ENCODE measurements at regions of chrX and their contacts with region 1.

Region 1: GRCh38 chrX:8971116-8971515 is 62.8 kb downstream of the FAM9B start:
- DNase-seq: peak in 7 of 9 donors; percentile 18 to 59 (median 41)
- ATAC-seq: peak; percentile 49
- H3K4me3 ChIP-seq: no peak overlapping the region
- H3K4me3 Mint-ChIP-seq: no peak overlapping the region
- H3K27ac ChIP-seq: no peak overlapping the region
- H3K27ac Mint-ChIP-seq: peak overlapping the region in 3 of 9 donors; percentile 33 to 72 (median 33)
- H3K4me1 ChIP-seq: no peaks in the 10 kb centered on the region
- H3K4me1 Mint-ChIP-seq: peaks cover 0 to 2% (median 0%) of the 10 kb centered on the region in 7 donors
- H3K27me3 ChIP-seq: no peaks in the 10 kb centered on the region
- H3K27me3 Mint-ChIP-seq: no peaks in the 10 kb centered on the region

Region 2: DNA sequence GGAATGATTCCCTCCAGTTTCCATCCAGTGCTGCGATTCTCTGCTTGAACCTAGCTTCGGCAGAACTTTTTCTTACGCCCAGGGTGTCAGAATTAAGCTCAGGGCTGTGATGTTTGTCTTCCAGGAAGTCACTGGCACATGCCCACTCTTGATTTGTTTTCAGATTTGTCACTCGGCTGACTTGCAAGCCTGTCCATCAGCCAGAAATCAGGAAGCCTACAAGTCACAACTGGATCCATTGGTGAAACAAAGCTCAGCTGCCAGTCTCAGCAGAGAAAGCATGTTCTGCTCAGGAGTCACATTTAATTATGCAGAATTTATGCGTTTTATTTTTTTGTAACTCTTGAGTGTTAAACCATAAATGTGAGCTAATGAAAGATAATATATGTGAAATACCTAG is 1005.7 kb before region 1 on chrX:
- CTCF ChIA-PET with region 1: no interaction called
- POLR2A ChIA-PET with region 1: no interaction called
- intact Hi-C with region 1: no loop called
- DNase-seq: no peak
- ATAC-seq: no peak
- H3K4me3 ChIP-seq: no peak overlapping the region
- H3K4me3 Mint-ChIP-seq: no peak overlapping the region
- H3K27ac ChIP-seq: no peak overlapping the region
- H3K27ac Mint-ChIP-seq: no peak overlapping the region
- H3K4me1 ChIP-seq: no peaks in the 10 kb centered on the region
- H3K4me1 Mint-ChIP-seq: no peaks in the 10 kb centered on the region
- H3K27me3 ChIP-seq: no peaks in the 10 kb centered on the region
- H3K27me3 Mint-ChIP-seq: no peaks in the 10 kb centered on the region

Region 3: DNA sequence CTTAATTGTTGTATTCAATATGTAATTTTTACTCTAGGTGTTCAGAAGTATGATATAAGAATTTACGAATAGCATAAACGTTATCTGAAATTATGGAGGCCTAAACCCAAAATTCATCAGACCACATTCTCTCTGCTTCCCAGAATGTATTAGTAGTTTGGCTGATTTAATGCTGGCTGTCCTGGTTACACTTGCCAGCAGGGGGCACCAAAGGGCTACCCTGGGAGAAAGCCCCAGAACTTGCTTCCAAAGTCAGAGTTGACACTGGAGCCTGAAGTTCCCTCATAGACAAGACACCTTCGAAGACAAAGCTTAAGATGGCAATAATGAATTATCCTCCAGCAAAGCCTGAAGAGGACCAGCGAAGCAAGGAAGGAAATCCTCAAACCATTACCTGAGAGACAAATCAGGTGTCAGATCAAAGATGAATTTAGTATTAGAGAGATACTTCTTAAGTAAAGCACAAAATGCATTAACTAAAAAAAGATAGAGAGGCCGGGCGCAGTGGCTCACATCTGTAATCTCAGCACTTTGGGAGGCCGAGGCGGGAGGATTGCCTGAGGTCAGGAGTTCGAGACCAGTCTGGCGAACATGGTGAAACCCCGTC is 227.9 kb before region 1 on chrX:
- CTCF ChIA-PET with region 1: no interaction called
- POLR2A ChIA-PET with region 1: no interaction called
- intact Hi-C with region 1: loop called in 1 of 2 experiments (anchors 10 kb)
- DNase-seq: peak; percentile 23 to 68 (median 43)
- ATAC-seq: no peak
- H3K4me3 ChIP-seq: no peak overlapping the region
- H3K4me3 Mint-ChIP-seq: no peak overlapping the region
- H3K27ac ChIP-seq: no peak overlapping the region
- H3K27ac Mint-ChIP-seq: no peak overlapping the region
- H3K4me1 ChIP-seq: no peaks in the 10 kb centered on the region
- H3K4me1 Mint-ChIP-seq: no peaks in the 10 kb centered on the region
- H3K27me3 ChIP-seq: no peaks in the 10 kb centered on the region
- H3K27me3 Mint-ChIP-seq: peaks cover 0 to 6% (median 4%) of the 10 kb centered on the region in 5 donors

Region 4: GRCh38 chrX:9133426-9133825 is 162.3 kb after region 1 on chrX:
- CTCF ChIA-PET with region 1: no interaction called
- POLR2A ChIA-PET with region 1: no interaction called
- intact Hi-C with region 1: no loop called
- DNase-seq: no peak
- ATAC-seq: no peak
- H3K4me3 ChIP-seq: no peak overlapping the region
- H3K4me3 Mint-ChIP-seq: no peak overlapping the region
- H3K27ac ChIP-seq: no peak overlapping the region
- H3K27ac Mint-ChIP-seq: no peak overlapping the region
- H3K4me1 ChIP-seq: no peaks in the 10 kb centered on the region
- H3K4me1 Mint-ChIP-seq: peaks cover 0 to 2% (median 0%) of the 10 kb centered on the region in 7 donors
- H3K27me3 ChIP-seq: no peaks in the 10 kb centered on the region
- H3K27me3 Mint-ChIP-seq: no peaks in the 10 kb centered on the region

Region 5: DNA sequence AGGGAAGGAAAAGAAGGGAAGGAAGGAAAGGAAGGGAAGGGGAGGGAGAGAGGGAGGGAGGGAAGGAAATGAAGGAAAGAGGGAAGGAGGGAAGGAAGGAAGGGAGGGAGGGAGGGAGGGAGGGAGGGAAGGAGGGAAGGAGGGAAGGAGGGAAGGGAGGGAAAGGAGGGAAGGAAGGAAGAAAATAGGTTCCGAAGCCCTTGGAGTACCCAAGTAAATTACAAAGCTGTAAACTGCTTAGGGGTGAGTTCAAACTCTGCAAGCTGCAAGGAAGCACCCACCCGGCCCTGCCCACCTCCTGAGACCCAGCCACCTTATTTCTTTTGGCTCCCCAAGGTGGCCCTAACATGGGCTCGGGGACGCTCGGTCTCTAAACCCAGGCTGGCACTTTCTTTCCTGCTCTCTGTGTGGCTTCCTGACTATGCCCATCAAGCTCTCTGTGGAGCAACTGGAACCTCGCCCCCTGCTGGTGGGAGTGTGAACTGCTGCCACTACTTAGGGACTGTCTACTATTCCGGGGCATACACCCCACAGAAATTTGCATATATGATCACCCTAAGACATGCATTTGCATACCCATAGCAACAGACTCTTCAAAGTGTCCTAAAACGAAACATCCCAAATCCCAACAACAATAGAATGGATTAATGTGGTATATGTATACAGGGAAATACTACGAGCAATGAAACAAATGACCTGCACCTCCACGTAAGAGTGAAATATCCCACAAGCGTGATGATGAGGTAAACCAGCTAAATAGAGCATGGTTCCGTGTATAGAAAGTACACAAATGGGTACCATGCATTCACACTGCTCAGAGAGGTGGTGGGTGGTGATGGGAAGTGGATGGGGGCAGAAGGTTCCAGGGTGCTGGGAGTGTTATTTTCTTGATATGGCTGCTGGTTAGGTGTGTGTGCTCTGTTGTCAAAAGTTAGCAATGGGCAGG is 342.1 kb after region 1 on chrX:
- CTCF ChIA-PET with region 1: no interaction called
- POLR2A ChIA-PET with region 1: no interaction called
- intact Hi-C with region 1: loop called (anchors 1 kb)
- DNase-seq: peak; percentile 12 to 69 (median 57)
- ATAC-seq: peak; percentile 83
- H3K4me3 ChIP-seq: no peak overlapping the region
- H3K4me3 Mint-ChIP-seq: peak overlapping the region in 2 of 10 donors; percentile 50 to 56
- H3K27ac ChIP-seq: no peak overlapping the region
- H3K27ac Mint-ChIP-seq: peak overlapping the region in 3 of 9 donors; percentile 26 to 75 (median 66)
- H3K4me1 ChIP-seq: peaks cover 4 to 6% of the 10 kb centered on the region in 2 donors
- H3K4me1 Mint-ChIP-seq: peaks cover 10 to 21% (median 11%) of the 10 kb centered on the region in 7 donors
- H3K27me3 ChIP-seq: no peaks in the 10 kb centered on the region
- H3K27me3 Mint-ChIP-seq: no peaks in the 10 kb centered on the region

Region 6: GRCh38 chrX:9352694-9353411 is 381.7 kb after region 1 on chrX:
- CTCF ChIA-PET with region 1: no interaction called
- POLR2A ChIA-PET with region 1: no interaction called
- intact Hi-C with region 1: loop called in 1 of 2 experiments (anchors 2 kb)
- DNase-seq: peak in 4 of 9 donors; percentile 12 to 27 (median 22)
- ATAC-seq: peak; percentile 63
- H3K4me3 ChIP-seq: peak overlapping the region; percentile 8
- H3K4me3 Mint-ChIP-seq: peak overlapping the region; percentile 60 to 82 (median 74)
- H3K27ac ChIP-seq: no peak overlapping the region
- H3K27ac Mint-ChIP-seq: peak overlapping the region in 8 of 9 donors; percentile 74 to 95 (median 82)
- H3K4me1 ChIP-seq: peaks cover 10 to 36% of the 10 kb centered on the region in 2 donors
- H3K4me1 Mint-ChIP-seq: peaks cover 16 to 45% (median 31%) of the 10 kb centered on the region in 7 donors
- H3K27me3 ChIP-seq: no peaks in the 10 kb centered on the region
- H3K27me3 Mint-ChIP-seq: peaks cover 0 to 4% (median 0%) of the 10 kb centered on the region in 5 donors

Region 7: GRCh38 chrX:9644335-9644734 is 673.2 kb after region 1 on chrX:
- CTCF ChIA-PET with region 1: no interaction called
- POLR2A ChIA-PET with region 1: no interaction called
- intact Hi-C with region 1: loop called in 1 of 2 experiments (anchors 5 kb)
- DNase-seq: peak in 8 of 9 donors; percentile 22 to 58 (median 36)
- ATAC-seq: peak; percentile 92
- H3K4me3 ChIP-seq: no peak overlapping the region
- H3K4me3 Mint-ChIP-seq: peak overlapping the region in 8 of 10 donors; percentile 28 to 60 (median 49)
- H3K27ac ChIP-seq: no peak overlapping the region
- H3K27ac Mint-ChIP-seq: peak overlapping the region in 7 of 9 donors; percentile 9 to 78 (median 52)
- H3K4me1 ChIP-seq: peaks cover 3 to 4% of the 10 kb centered on the region in 2 donors
- H3K4me1 Mint-ChIP-seq: peaks cover 14 to 41% (median 36%) of the 10 kb centered on the region in 7 donors
- H3K27me3 ChIP-seq: no peaks in the 10 kb centered on the region
- H3K27me3 Mint-ChIP-seq: no peaks in the 10 kb centered on the region

Region 8: GRCh38 chrX:10039821-10040793 is 1069.0 kb after region 1 on chrX:
- CTCF ChIA-PET with region 1: no interaction called
- POLR2A ChIA-PET with region 1: no interaction called
- intact Hi-C with region 1: no loop called
- DNase-seq: no peak
- ATAC-seq: no peak
- H3K4me3 ChIP-seq: no peak overlapping the region
- H3K4me3 Mint-ChIP-seq: no peak overlapping the region
- H3K27ac ChIP-seq: no peak overlapping the region
- H3K27ac Mint-ChIP-seq: no peak overlapping the region
- H3K4me1 ChIP-seq: no peaks in the 10 kb centered on the region
- H3K4me1 Mint-ChIP-seq: peaks cover 0 to 3% (median 0%) of the 10 kb centered on the region in 7 donors
- H3K27me3 ChIP-seq: no peaks in the 10 kb centered on the region
- H3K27me3 Mint-ChIP-seq: no peaks in the 10 kb centered on the region